Right ventricle myocardium inferior (tissue), 1 donor: ENCODE measurements at regions of chr3 and their contacts with region 1.

Region 1: DNA sequence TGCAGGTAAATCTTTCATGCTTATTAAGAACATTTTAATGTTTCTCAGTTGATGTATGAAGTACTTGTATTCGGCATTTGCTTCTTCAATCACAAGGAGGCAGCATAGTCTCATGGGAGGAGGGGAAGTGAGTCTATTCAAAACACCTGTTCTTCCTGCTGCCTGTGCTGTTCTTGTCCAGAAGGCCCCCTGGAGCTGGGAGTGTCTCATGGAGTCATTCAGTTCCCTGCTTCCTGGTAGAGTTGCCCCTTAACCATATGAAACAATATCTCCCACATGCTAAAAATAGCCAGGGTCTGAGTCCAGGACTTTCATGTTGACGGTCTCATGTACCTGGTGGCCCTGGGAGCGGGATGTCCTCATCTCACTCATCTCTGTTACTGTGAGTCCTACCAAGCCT is 15.5 kb upstream of the PPP1R2 start:
- DNase-seq: no peak
- ATAC-seq: no peak

Region 2: DNA sequence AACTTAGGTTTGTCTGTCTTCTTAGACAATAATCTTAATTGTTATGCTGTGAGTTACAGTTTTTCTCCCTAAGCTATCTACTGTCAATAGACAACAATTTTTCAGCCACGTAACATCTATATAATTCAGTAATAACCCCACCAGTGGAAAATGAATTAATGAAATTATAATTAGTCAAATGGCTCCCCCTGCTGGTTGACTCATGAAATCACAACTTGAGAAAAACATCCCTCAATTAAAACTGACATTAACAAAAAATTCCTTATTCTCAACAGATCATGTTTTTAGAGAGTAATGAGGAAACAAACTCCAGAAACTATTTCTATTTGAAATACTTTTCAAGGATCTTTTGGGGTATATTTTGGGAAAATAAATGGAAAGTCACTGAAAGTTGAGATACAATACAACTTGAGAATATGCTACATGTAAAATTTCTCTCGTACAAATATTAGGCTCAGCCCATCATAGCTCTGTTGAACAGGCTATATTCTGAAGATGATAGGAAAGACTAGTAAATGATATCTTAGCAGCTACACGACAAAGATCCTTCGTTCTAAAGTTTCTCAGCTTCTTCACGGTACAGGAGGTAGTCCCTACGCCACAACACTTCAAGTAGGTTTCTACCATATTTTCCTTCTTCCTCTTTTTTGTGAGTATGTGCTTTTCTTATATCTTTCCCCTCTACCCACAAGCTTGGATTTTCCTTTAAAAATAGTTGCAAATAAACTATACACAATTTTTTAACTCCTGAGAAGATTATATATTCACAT is 36.2 kb before region 1 on chr3:
- intact Hi-C with region 1: no loop called
- DNase-seq: no peak
- ATAC-seq: no peak

Region 3: GRCh38 chr3:195850857-195851543 is 292.4 kb after region 1 on chr3:
- intact Hi-C with region 1: loop called (anchors 5 kb)
- DNase-seq: peak; percentile 82
- ATAC-seq: peak; percentile 93